Heart right ventricle (tissue), 16 donors: ENCODE measurements at regions of chr3 and their contacts with region 1.

Region 1: DNA sequence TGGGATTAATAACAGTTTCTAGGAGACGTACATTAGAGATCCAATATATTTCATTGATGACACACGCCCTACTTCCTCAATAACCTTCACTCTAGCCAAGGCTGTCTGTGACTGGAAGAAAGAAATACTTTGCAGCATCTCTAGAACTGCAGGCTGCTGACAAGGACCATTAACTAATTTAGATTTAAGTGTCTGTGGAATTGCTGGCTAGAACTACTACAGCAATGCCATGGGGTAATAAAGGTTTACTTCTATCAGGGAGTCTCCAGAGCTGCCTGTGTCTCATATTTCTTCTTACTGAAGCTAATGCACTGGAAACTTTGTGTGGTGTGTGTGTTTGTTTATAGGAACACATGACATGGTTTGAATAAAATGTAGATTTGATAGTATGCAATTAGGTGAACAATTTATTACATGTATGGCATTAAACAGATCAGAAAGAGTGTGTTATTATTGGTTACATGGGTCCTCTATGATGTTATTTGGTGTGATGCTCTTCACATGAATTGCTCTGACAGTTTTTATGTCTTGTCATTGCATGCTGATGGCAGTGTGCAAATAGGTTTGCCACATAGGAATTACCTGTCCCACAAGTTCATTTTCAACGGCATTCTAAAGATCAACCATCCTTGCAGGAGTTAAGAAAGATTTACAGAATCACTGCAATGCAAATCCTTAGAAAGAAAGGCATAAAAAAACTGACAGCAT is 916.2 kb upstream of the CADM2 start:
- DNase-seq: no peak
- ATAC-seq: no peak
- H3K4me3 ChIP-seq: no peak overlapping the region
- H3K27ac ChIP-seq: no peak overlapping the region
- H3K4me1 ChIP-seq: no peaks in the 10 kb centered on the region
- H3K27me3 ChIP-seq: no peaks in the 10 kb centered on the region
- CTCF ChIP-seq: no peak

Region 2: GRCh38 chr3:83934312-83935150 is 108.0 kb before region 1 on chr3:
- intact Hi-C with region 1: no loop called
- DNase-seq: no peak
- ATAC-seq: no peak
- H3K4me3 ChIP-seq: no peak overlapping the region
- H3K27ac ChIP-seq: no peak overlapping the region
- H3K4me1 ChIP-seq: no peaks in the 10 kb centered on the region
- H3K27me3 ChIP-seq: no peaks in the 10 kb centered on the region
- CTCF ChIP-seq: no peak

Region 3: GRCh38 chr3:84108442-84108971 is 66.0 kb after region 1 on chr3:
- intact Hi-C with region 1: loop called in 1 of 10 experiments (anchors 10 kb)
- DNase-seq: no peak
- ATAC-seq: no peak
- H3K4me3 ChIP-seq: no peak overlapping the region
- H3K27ac ChIP-seq: no peak overlapping the region
- H3K4me1 ChIP-seq: no peaks in the 10 kb centered on the region
- H3K27me3 ChIP-seq: no peaks in the 10 kb centered on the region
- CTCF ChIP-seq: no peak

Region 4: DNA sequence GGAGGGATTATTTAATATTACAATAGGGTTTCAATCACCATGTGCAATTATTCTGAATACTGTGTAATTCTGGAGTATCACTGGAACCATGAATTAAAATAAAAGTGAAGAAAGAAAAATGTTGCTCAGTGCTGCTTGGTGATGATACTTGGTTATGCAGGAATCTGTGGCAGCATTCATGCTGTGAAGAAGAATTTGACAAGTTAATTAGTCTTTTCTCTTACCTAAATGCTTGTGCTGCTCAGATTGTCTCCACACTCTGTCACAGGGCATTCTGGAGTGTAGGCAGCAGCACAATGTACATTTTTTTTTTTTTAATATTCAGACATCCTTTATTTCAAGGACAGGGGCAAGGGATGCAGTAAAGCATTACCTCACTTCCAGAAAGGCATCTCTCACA is 166.9 kb after region 1 on chr3:
- intact Hi-C with region 1: no loop called
- DNase-seq: no peak
- ATAC-seq: no peak
- H3K4me3 ChIP-seq: no peak overlapping the region
- H3K27ac ChIP-seq: no peak overlapping the region
- H3K4me1 ChIP-seq: no peaks in the 10 kb centered on the region
- H3K27me3 ChIP-seq: no peaks in the 10 kb centered on the region
- CTCF ChIP-seq: no peak